Activated B cell treated with CpG ODN at 0.5 μM for 24 hours (primary cell): ENCODE measurements at regions of chr15 and their contacts with region 1.

Region 1: GRCh38 chr15:40098489-40099261 is 10.0 kb downstream of the BMF start:
- DNase-seq: peak; percentile 74
- ATAC-seq: peak; percentile 78
- H3K4me3 Mint-ChIP-seq: peak overlapping the region; percentile 77
- H3K27ac Mint-ChIP-seq: peak overlapping the region; percentile 99
- H3K4me1 Mint-ChIP-seq: peaks cover 98% of the 10 kb centered on the region
- H3K27me3 Mint-ChIP-seq: no peaks in the 10 kb centered on the region
- CTCF ChIP-seq: no peak

Region 2: DNA sequence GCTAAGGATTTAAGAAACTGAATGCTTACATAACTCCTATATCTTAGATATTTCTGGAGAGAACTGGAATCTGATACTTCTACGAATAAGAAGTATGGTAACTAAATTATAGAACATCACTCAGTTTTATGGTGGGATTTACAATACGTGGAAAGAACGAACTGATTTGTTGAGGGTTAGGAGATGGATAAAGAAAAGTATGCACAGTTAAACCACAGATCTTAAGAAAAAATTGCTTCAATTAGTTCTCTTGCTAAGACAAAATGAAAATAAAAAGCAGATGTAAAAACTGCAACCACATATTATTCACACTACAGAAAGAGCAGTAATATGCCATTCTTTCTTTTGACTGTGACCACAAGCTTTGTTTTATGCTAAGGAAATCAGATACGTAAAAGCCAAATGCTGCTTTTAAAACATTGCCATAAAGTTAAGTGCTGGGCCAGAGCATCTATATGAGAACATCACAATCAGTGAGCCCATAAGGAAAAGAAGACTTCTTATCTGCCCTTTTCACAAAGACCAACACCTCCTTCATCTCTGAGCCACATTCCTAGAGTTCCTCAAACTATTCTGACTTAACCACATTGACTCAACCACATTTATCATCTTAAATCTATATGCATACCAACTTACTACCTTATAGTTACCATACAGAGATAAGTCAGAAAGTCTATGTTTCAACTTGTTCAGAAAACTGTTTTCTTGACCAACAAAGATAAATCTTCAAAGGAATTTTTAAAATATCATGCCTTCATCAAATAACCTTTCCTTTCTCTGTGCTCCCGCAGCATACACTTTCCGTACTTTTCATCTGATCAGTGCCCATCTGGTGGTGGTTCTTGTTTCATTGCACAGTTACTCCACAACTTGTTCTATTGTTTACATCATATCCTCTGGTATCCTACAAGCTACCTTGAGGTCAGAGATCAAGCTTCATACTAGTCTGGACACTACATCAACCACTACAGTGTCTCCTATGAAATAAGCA is 377.8 kb before region 1 on chr15:
- CTCF ChIA-PET with region 1: no interaction called
- POLR2A ChIA-PET with region 1: no interaction called
- intact Hi-C with region 1: no loop called
- DNase-seq: no peak
- ATAC-seq: no peak
- H3K4me3 Mint-ChIP-seq: no peak overlapping the region
- H3K27ac Mint-ChIP-seq: no peak overlapping the region
- H3K4me1 Mint-ChIP-seq: no peaks in the 10 kb centered on the region
- H3K27me3 Mint-ChIP-seq: peaks cover 6% of the 10 kb centered on the region
- CTCF ChIP-seq: no peak

Region 3: GRCh38 chr15:40029979-40030893 is 68.4 kb before region 1 on chr15:
- CTCF ChIA-PET with region 1: no interaction called
- POLR2A ChIA-PET with region 1: interaction called, 12 read pairs
- intact Hi-C with region 1: no loop called
- DNase-seq: no peak
- ATAC-seq: no peak
- H3K4me3 Mint-ChIP-seq: no peak overlapping the region
- H3K27ac Mint-ChIP-seq: no peak overlapping the region
- H3K4me1 Mint-ChIP-seq: no peaks in the 10 kb centered on the region
- H3K27me3 Mint-ChIP-seq: no peaks in the 10 kb centered on the region
- CTCF ChIP-seq: peak; percentile 16

Region 4: DNA sequence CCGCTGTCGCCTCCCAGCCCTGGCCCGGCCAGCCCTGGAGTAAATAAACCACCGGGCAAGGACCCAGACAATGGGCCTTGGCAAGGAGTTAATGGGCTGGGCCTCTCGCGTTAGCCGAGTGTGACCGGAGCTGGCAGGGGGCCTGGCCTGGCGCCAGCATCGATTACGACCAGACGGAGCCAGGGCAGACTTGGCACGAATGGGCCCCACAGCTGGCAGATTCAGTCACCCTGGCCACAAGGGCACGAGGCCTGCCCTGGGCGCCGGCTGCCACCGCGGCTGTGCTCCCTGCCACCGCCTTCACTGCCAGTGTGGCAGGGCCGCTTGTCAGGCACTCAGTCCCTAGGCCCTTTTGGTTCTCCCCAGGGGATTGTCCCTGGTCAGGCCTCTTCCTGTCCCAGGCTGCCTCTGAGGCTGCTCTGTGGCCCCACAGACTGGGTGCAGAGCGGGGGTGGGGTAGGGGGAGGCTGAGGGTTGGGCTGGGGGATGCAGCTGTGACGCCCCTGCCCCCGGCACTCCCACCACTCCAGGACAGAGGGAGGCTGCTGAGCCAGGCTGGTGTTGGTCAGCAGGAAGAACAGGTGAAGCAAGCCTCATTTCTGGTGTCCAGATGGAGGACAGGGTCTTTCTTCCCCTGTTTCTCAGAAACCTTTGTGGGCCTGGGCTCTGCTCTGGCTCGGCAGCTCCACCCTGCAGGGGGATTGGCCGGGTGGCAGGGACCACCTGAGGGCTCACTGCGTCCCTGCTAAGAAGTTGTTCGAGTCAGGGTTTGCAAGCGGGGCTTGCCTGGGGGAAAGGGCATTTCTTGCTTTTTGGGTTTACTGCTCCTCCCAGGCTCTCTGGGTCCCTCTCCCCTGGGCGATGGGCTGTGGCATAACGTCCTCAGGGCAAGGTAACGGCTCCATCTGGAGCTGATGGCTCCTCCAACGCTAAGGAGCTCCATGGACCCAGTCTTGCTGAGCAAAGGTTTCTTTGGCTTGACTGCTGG is 29.2 kb before region 1 on chr15:
- CTCF ChIA-PET with region 1: interaction called, 5 read pairs
- POLR2A ChIA-PET with region 1: interaction called, 504 read pairs
- intact Hi-C with region 1: loop called (anchors 1 kb)
- DNase-seq: peak; percentile 59
- ATAC-seq: peak; percentile 76
- H3K4me3 Mint-ChIP-seq: peak overlapping the region; percentile 60
- H3K27ac Mint-ChIP-seq: peak overlapping the region; percentile 83
- H3K4me1 Mint-ChIP-seq: peaks cover 48% of the 10 kb centered on the region
- H3K27me3 Mint-ChIP-seq: no peaks in the 10 kb centered on the region
- CTCF ChIP-seq: no peak

Region 5: DNA sequence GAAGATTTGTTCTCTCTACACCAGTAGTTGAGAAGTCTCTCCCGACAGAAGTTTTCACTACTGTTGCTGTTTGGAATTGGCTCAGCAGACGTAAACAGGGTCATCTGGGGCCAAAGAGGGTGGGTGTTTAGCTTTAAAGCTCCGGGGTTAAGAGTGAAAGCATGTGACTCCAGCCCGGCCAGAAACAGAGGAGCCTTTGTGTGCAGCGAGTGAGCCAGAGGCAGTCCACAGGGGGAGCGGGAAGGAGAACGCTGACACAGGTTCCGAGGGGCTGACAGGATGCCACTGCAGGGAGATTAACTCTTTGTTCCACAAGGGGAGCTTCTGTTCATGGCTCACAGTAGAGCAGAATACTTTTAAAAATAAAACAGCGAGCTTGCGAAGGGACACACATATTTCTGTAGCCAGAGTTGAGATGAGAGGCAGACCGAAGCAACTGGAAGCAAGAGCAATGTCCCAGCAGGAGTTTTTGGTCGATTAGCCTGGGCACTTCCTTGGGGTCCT is 16.9 kb before region 1 on chr15:
- CTCF ChIA-PET with region 1: interaction called, 45 read pairs
- POLR2A ChIA-PET with region 1: interaction called, 504 read pairs
- intact Hi-C with region 1: loop called (anchors 1 kb)
- DNase-seq: no peak
- ATAC-seq: no peak
- H3K4me3 Mint-ChIP-seq: peak overlapping the region; percentile 78
- H3K27ac Mint-ChIP-seq: peak overlapping the region; percentile 89
- H3K4me1 Mint-ChIP-seq: peaks cover 60% of the 10 kb centered on the region
- H3K27me3 Mint-ChIP-seq: no peaks in the 10 kb centered on the region
- CTCF ChIP-seq: no peak

Region 6: DNA sequence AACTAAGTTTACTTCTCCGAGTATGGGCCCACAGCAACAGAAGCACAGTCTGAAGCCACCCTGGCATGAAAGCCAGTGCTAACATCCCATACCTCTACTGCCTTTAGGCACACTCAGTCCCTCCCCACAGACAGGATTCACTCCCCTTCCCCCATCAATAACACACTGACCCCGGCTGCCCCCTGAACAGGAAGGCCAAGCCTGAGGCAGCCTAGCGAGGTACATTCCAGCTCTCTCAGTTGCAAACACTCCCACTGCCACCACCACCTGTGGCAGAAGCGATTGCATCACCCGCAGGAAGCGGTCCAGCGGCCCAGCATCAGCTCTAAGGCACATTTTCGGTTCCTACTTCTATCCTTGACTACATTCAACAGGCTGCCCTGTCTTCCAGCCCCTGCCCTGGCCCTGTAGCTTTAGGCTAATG is 17.0 kb after region 1 on chr15:
- CTCF ChIA-PET with region 1: interaction called, 10 read pairs
- POLR2A ChIA-PET with region 1: interaction called, 172 read pairs
- intact Hi-C with region 1: no loop called
- DNase-seq: peak; percentile 67
- ATAC-seq: peak; percentile 94
- H3K4me3 Mint-ChIP-seq: peak overlapping the region; percentile 61
- H3K27ac Mint-ChIP-seq: peak overlapping the region; percentile 98
- H3K4me1 Mint-ChIP-seq: peaks cover 42% of the 10 kb centered on the region
- H3K27me3 Mint-ChIP-seq: no peaks in the 10 kb centered on the region
- CTCF ChIP-seq: no peak

Region 7: DNA sequence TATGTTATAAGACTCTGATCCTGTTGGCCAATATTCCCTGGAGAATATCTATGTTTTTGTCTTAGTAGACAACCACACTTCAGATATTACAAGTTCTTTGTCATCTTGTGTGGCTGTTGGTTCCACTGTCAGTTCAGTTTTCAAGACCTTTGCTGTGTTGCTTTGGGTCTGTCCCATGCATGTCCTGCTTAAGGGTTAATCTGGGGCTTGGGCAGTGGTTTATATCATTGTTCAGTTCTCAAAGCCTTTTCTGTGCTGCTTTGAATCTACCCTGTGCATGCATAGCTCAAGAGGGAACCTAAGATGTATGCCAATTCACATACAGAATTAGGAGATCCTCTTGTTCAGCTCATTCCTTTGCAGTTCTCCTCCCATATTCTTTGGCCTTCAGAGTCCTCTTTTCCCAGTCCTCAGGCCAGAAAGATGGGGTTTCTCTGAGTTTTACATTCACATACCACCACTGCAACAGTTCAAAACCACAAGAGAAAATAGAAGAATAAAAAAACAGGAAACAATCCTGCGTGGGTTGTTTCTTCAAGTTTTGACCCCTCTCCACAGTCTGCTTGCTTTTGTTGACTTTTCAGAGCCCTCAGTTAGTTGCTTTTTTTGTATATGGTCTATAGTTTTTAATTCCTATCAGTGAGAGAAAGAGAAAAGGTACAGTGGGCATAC is 83.8 kb after region 1 on chr15:
- CTCF ChIA-PET with region 1: interaction called, 5 read pairs
- POLR2A ChIA-PET with region 1: interaction called, 11 read pairs
- intact Hi-C with region 1: no loop called
- DNase-seq: no peak
- ATAC-seq: no peak
- H3K4me3 Mint-ChIP-seq: peak overlapping the region; percentile 62
- H3K27ac Mint-ChIP-seq: peak overlapping the region; percentile 86
- H3K4me1 Mint-ChIP-seq: peaks cover 41% of the 10 kb centered on the region
- H3K27me3 Mint-ChIP-seq: no peaks in the 10 kb centered on the region
- CTCF ChIP-seq: no peak

Region 8: GRCh38 chr15:40226736-40227135 is 128.1 kb after region 1 on chr15:
- CTCF ChIA-PET with region 1: no interaction called
- POLR2A ChIA-PET with region 1: no interaction called
- intact Hi-C with region 1: no loop called
- DNase-seq: no peak
- ATAC-seq: no peak
- H3K4me3 Mint-ChIP-seq: no peak overlapping the region
- H3K27ac Mint-ChIP-seq: no peak overlapping the region
- H3K4me1 Mint-ChIP-seq: no peaks in the 10 kb centered on the region
- H3K27me3 Mint-ChIP-seq: no peaks in the 10 kb centered on the region
- CTCF ChIP-seq: no peak

Region 9: DNA sequence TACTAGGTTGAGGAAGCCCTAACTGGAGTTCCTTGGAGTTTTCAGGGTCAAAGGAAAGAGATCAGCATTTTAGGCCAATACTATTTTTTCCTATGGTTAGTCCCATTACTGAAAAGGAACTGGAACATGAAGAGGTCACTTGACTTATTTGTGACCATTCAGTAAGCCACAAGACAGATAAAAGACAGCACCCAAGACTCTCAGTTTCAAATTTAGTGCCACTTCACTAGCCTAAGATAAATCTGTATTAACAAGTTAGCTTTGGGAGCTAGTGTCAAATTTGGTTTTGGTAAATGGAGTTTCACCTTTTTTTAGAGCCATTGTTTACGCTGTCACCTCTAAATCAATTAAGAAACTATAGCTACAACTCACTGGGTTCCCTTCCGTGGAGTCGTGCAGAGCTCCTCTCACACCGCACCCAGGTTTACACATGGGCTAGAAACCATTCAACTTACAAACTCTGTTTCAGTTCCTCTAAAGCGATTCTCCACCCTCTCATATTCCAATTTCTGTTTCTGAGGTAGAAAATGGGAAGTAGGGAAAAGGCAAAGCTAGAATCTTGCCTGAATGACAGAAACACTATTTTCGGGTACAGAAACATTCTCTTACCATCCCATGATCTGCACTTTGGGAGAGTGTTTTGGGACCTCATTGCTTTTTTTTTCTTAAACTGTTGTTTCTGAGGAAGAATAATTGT is 451.8 kb after region 1 on chr15:
- CTCF ChIA-PET with region 1: no interaction called
- POLR2A ChIA-PET with region 1: interaction called, 15 read pairs
- intact Hi-C with region 1: no loop called
- DNase-seq: no peak
- ATAC-seq: peak; percentile 84
- H3K4me3 Mint-ChIP-seq: peak overlapping the region; percentile 76
- H3K27ac Mint-ChIP-seq: peak overlapping the region; percentile 93
- H3K4me1 Mint-ChIP-seq: peaks cover 92% of the 10 kb centered on the region
- H3K27me3 Mint-ChIP-seq: no peaks in the 10 kb centered on the region
- CTCF ChIP-seq: no peak